ENCODE measurements at regions of chr11 and their contacts with region 1.

Region 1: GRCh38 chr11:32792948-32793475 is 1.4 kb downstream of the CCDC73 start:
- DNase-seq: peak; percentile 35
- ATAC-seq: peak; percentile 90
- H3K4me3 ChIP-seq: peak overlapping the region; percentile 23 to 47
- H3K27ac ChIP-seq: no peak overlapping the region
- H3K4me1 ChIP-seq: peaks cover 0 to 13% of the 10 kb centered on the region in 2 experiments; a peak in 1 of 4 replicates
- H3K27me3 ChIP-seq: no peaks in the 10 kb centered on the region
- CTCF ChIP-seq: peak; percentile 56 to 84 (median 72)
- POLR2A ChIP-seq: no peak
- RAD21 ChIP-seq: peak; percentile 82

Region 2: DNA sequence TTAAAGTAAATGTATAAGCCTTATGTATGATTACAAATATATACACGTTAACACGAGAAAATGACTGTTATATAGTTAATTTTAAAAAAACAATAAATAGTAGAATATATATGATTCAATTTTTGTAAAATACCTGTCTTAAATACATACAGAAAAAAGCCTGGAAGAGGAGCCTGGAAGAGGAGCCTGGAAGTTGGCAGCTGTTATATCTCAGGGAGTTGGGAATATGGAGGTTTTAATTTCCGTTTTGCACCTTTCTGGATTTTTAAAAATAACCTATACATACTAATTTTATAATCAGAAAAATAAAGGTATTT is 469.2 kb before region 1 on chr11:
- CTCF ChIA-PET with region 1: interaction called, 12 read pairs
- POLR2A ChIA-PET with region 1: no interaction called
- RAD21 ChIA-PET with region 1: interaction called in 1 of 2 experiments, 3 read pairs
- intact Hi-C with region 1: loop called (anchors 2 kb)
- DNase-seq: no peak
- ATAC-seq: no peak
- H3K4me3 ChIP-seq: no peak overlapping the region
- H3K27ac ChIP-seq: no peak overlapping the region
- H3K4me1 ChIP-seq: no peaks in the 10 kb centered on the region
- H3K27me3 ChIP-seq: no peaks in the 10 kb centered on the region
- CTCF ChIP-seq: no peak
- POLR2A ChIP-seq: no peak
- RAD21 ChIP-seq: no peak

Region 3: DNA sequence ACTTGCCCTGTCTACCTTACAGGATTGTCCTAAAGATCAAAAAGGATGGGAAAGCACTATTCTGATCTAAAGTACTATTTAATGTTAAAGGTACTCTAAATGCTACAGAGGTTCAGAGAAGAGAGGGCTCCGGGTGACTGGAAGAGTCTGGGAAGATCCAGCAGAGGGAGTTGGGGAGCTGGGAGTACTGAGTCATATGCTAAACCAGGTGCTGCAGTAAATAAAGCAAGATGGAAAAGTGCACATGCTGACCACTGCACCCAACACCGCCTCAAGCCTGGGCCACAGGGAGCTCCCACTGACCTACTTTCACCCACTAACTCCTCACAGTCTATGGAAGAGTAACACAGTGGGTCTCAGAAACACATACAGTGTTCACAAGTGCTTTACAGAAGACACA is 407.0 kb before region 1 on chr11:
- CTCF ChIA-PET with region 1: interaction called, 3 read pairs
- POLR2A ChIA-PET with region 1: no interaction called
- RAD21 ChIA-PET with region 1: no interaction called
- intact Hi-C with region 1: loop called (anchors 5 kb)
- DNase-seq: peak; percentile 38
- ATAC-seq: peak; percentile 99
- H3K4me3 ChIP-seq: no peak overlapping the region
- H3K27ac ChIP-seq: no peak overlapping the region
- H3K4me1 ChIP-seq: peaks cover 0 to 4% of the 10 kb centered on the region in 2 experiments; a peak in 1 of 4 replicates
- H3K27me3 ChIP-seq: peaks cover 27% of the 10 kb centered on the region; the same call in 1 of the 2 replicates
- CTCF ChIP-seq: peak; percentile 46 to 77 (median 67); a peak in 5 of 6 replicates
- POLR2A ChIP-seq: no peak
- RAD21 ChIP-seq: peak; percentile 60

Region 4: DNA sequence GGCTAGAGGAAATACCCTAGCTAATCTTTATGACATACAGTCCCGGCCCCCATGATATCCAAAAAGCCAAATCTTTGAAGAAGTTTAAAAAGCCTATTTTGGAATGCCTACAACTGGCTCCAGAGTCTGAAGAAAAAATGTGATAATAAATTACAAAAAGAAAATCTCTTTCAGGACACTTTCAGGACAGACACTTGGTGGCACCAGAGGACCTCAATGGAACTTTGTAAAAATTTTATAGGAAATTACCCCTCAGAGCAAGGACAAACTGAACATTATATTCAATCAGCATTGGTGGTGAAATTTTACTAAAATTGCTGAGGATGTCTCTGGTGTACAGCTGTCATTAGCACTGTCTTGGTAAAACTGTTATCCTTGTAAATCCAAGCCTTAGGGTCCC is 79.5 kb before region 1 on chr11:
- CTCF ChIA-PET with region 1: interaction called, 5 read pairs
- POLR2A ChIA-PET with region 1: no interaction called
- RAD21 ChIA-PET with region 1: interaction called in 1 of 2 experiments, 3 read pairs
- intact Hi-C with region 1: loop called (anchors 1 kb)
- DNase-seq: peak; percentile 8
- ATAC-seq: peak; percentile 66
- H3K4me3 ChIP-seq: no peak overlapping the region
- H3K27ac ChIP-seq: no peak overlapping the region
- H3K4me1 ChIP-seq: no peaks in the 10 kb centered on the region
- H3K27me3 ChIP-seq: no peaks in the 10 kb centered on the region
- CTCF ChIP-seq: peak; percentile 55 to 69 (median 68)
- POLR2A ChIP-seq: no peak
- RAD21 ChIP-seq: peak; percentile 81

Region 5: DNA sequence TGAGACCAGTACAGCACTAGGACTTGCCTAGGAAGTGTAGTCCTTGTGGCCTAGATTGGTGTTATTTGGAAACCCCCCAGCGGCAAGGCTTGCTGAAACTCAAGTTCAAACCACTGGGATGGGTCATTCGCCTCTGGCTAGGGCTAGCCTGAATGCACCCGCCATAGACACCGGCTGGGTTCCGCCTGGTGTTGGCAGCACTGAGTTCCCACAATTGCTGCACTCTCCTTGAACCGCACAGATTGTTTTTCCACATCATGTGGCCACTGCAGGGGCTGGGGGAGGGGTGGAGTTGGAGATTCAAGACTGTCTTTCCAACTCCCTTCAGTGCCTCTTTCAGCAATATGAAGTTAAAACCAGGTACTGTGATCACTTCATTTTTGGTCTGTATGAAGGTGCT is 41.6 kb before region 1 on chr11:
- CTCF ChIA-PET with region 1: interaction called, 6 read pairs
- POLR2A ChIA-PET with region 1: no interaction called
- RAD21 ChIA-PET with region 1: no interaction called
- intact Hi-C with region 1: loop called (anchors 1 kb)
- DNase-seq: no peak
- ATAC-seq: peak; percentile 62; the same call in 1 of the 2 replicates
- H3K4me3 ChIP-seq: no peak overlapping the region
- H3K27ac ChIP-seq: no peak overlapping the region
- H3K4me1 ChIP-seq: no peaks in the 10 kb centered on the region
- H3K27me3 ChIP-seq: no peaks in the 10 kb centered on the region
- CTCF ChIP-seq: 0 out of 6 replicates have a peak, but pooled peaks of 2 of the 3 experiments have one; percentile 15 to 20
- POLR2A ChIP-seq: no peak
- RAD21 ChIP-seq: no peak